ENCODE measurements at regions of chr2 and their contacts with region 1.

Region 1: DNA sequence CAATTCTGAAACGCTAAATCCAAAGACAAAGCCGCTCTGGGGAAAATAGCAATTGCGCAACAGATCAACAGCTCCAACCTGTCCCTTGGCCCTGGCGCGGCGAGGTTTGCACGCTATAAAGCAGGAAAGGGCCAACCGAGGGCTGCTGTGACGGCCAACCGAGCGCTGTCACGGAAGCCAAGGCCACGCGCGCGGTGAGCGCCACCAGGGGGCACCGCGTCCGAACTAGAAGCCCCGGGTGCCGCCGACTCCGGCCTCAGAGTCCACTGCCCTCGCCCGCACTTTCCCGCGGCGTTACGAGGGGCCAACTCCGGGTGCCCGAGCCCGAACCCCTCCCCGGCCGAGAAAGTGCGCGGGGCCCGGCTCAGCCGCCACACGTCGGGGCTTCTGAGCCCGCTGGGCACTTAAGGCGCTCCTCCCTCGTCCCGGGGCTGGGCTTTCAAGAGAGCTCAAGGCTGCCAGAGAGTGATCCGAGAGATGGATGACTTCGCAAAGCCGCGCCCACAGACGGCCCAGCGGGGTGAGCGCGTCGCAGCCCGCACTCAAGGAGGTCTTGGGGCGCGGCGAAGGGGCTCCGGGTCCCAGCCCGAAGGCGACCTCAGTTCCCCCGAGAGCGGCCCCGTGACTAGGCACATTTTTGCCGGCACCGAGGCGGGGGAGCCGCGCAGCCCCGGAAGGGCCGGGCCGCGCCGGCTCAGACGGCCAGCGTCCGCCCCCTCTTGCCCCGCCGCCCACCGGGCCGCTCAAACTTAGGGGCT is 897 bp downstream of the NFE2L2 start:
- DNase-seq: peak; percentile 96
- ATAC-seq: peak; percentile 61
- H3K4me3 ChIP-seq: peak overlapping the region; percentile 94 to 99 (median 98)
- H3K27ac ChIP-seq: peak overlapping the region; percentile 100
- H3K4me1 ChIP-seq: peaks cover 66% of the 10 kb centered on the region
- H3K27me3 ChIP-seq: no peaks in the 10 kb centered on the region; a peak in 1 of 5 replicates
- CTCF ChIP-seq: peak; percentile 98
- EP300 ChIP-seq: peak; percentile 92 to 99
- POLR2A ChIP-seq: peak; percentile 78 to 89
- RAD21 ChIP-seq: peak; percentile 99

Region 2: GRCh38 chr2:177187631-177188312 is 75.9 kb before region 1 on chr2:
- CTCF ChIA-PET with region 1: no interaction called
- POLR2A ChIA-PET with region 1: interaction called, 21 read pairs
- in situ Hi-C with region 1: no loop called
- intact Hi-C with region 1: no loop called
- DNase-seq: peak; percentile 95
- ATAC-seq: peak; percentile 83
- H3K4me3 ChIP-seq: peak overlapping the region; percentile 10 to 56 (median 17)
- H3K27ac ChIP-seq: peak overlapping the region; percentile 90
- H3K4me1 ChIP-seq: peaks cover 70% of the 10 kb centered on the region
- H3K27me3 ChIP-seq: no peaks in the 10 kb centered on the region
- CTCF ChIP-seq: no peak
- EP300 ChIP-seq: peak; percentile 39 to 91; a peak in 2 of 4 replicates
- POLR2A ChIP-seq: peak; percentile 66 to 71; a peak in 3 of 4 replicates
- RAD21 ChIP-seq: peak; percentile 6; the same call in 1 of the 2 replicates

Region 3: GRCh38 chr2:177239932-177240630 is 23.5 kb before region 1 on chr2:
- CTCF ChIA-PET with region 1: no interaction called
- POLR2A ChIA-PET with region 1: interaction called, 14 read pairs
- in situ Hi-C with region 1: no loop called
- intact Hi-C with region 1: no loop called
- DNase-seq: no peak
- ATAC-seq: peak; percentile 2; the same call in 2 of the 3 replicates
- H3K4me3 ChIP-seq: no peak overlapping the region
- H3K27ac ChIP-seq: peak overlapping the region; percentile 37
- H3K4me1 ChIP-seq: peaks cover 96% of the 10 kb centered on the region
- H3K27me3 ChIP-seq: no peaks in the 10 kb centered on the region
- CTCF ChIP-seq: no peak
- EP300 ChIP-seq: no peak
- POLR2A ChIP-seq: no peak
- RAD21 ChIP-seq: no peak

Region 4: GRCh38 chr2:177332041-177332991 is 68.7 kb after region 1 on chr2:
- CTCF ChIA-PET with region 1: interaction called, 24 read pairs
- POLR2A ChIA-PET with region 1: interaction called, 16 read pairs
- in situ Hi-C with region 1: loop called (anchors 5 kb)
- intact Hi-C with region 1: loop called (anchors 1 kb)
- DNase-seq: peak; percentile 74
- ATAC-seq: peak; percentile 91
- H3K4me3 ChIP-seq: no peak overlapping the region
- H3K27ac ChIP-seq: peak overlapping the region; percentile 41
- H3K4me1 ChIP-seq: peaks cover 32% of the 10 kb centered on the region
- H3K27me3 ChIP-seq: no peaks in the 10 kb centered on the region
- CTCF ChIP-seq: peak; percentile 87
- EP300 ChIP-seq: peak in 1 of 2 experiments; percentile 11; a peak in 1 of 4 replicates
- POLR2A ChIP-seq: no peak
- RAD21 ChIP-seq: peak; percentile 82

Region 5: GRCh38 chr2:177405029-177405692 is 141.5 kb after region 1 on chr2:
- CTCF ChIA-PET with region 1: no interaction called
- POLR2A ChIA-PET with region 1: interaction called, 13 read pairs
- in situ Hi-C with region 1: no loop called
- intact Hi-C with region 1: no loop called
- DNase-seq: peak; percentile 82
- ATAC-seq: peak; percentile 92
- H3K4me3 ChIP-seq: no peak overlapping the region
- H3K27ac ChIP-seq: peak overlapping the region; percentile 13
- H3K4me1 ChIP-seq: peaks cover 98% of the 10 kb centered on the region
- H3K27me3 ChIP-seq: no peaks in the 10 kb centered on the region
- CTCF ChIP-seq: no peak
- EP300 ChIP-seq: peak in 1 of 2 experiments; percentile 37; a peak in 1 of 4 replicates
- POLR2A ChIP-seq: no peak
- RAD21 ChIP-seq: no peak

Measured in HepG2 (cell line).